Endothelial cell of umbilical vein (primary cell): ENCODE measurements at regions of chr12 and their contacts with region 1.

Region 1: GRCh38 chr12:27243804-27244683 is at the start of gene STK38L:
- DNase-seq: peak; percentile 92
- H3K4me3 ChIP-seq: peak within 1 kb of the TSS; percentile 80 to 87 (median 86)
- H3K27ac ChIP-seq: peak within 1 kb of the TSS; percentile 76
- H3K4me1 ChIP-seq: peaks cover 14% of the 10 kb centered on the region
- H3K27me3 ChIP-seq: no peaks in the 10 kb centered on the region
- CTCF ChIP-seq: peak in 1 of 2 donors; percentile 10
- POLR2A ChIP-seq: peak; percentile 97
- total RNA-seq, gene STK38L: 58.4 and 60.0 TPM in 2 replicates

Region 2: GRCh38 chr12:27142101-27142721 is 101.8 kb before region 1 on chr12:
- CTCF ChIA-PET with region 1: no interaction called
- POLR2A ChIA-PET with region 1: no interaction called
- dilution Hi-C with region 1: no loop called
- intact Hi-C with region 1: loop called (anchors 5 kb)
- DNase-seq: peak; percentile 83
- H3K4me3 ChIP-seq: no peak overlapping the region
- H3K27ac ChIP-seq: no peak overlapping the region
- H3K4me1 ChIP-seq: peaks cover 2% of the 10 kb centered on the region
- H3K27me3 ChIP-seq: no peaks in the 10 kb centered on the region
- CTCF ChIP-seq: peak; percentile 79 to 86
- POLR2A ChIP-seq: no peak

Region 3: GRCh38 chr12:27185234-27186021 is 58.6 kb before region 1 on chr12:
- CTCF ChIA-PET with region 1: no interaction called
- POLR2A ChIA-PET with region 1: no interaction called
- dilution Hi-C with region 1: no loop called
- intact Hi-C with region 1: loop called (anchors 2 kb)
- DNase-seq: peak; percentile 56
- H3K4me3 ChIP-seq: no peak overlapping the region
- H3K27ac ChIP-seq: peak overlapping the region; percentile 15
- H3K4me1 ChIP-seq: peaks cover 17% of the 10 kb centered on the region
- H3K27me3 ChIP-seq: no peaks in the 10 kb centered on the region
- CTCF ChIP-seq: no peak
- POLR2A ChIP-seq: no peak

Region 4: GRCh38 chr12:27219693-27220056 is 24.4 kb before region 1 on chr12:
- CTCF ChIA-PET with region 1: no interaction called
- POLR2A ChIA-PET with region 1: no interaction called
- dilution Hi-C with region 1: no loop called
- intact Hi-C with region 1: no loop called
- DNase-seq: no peak
- H3K4me3 ChIP-seq: no peak overlapping the region
- H3K27ac ChIP-seq: no peak overlapping the region
- H3K4me1 ChIP-seq: no peaks in the 10 kb centered on the region
- H3K27me3 ChIP-seq: no peaks in the 10 kb centered on the region
- CTCF ChIP-seq: no peak
- POLR2A ChIP-seq: no peak

Region 5: GRCh38 chr12:27284751-27285150 is 40.7 kb after region 1 on chr12:
- CTCF ChIA-PET with region 1: interaction called, 6 read pairs
- POLR2A ChIA-PET with region 1: no interaction called
- dilution Hi-C with region 1: no loop called
- intact Hi-C with region 1: loop called (anchors 2 kb)
- DNase-seq: peak; percentile 92
- H3K4me3 ChIP-seq: peak overlapping the region in 1 of 3 experiments; percentile 40
- H3K27ac ChIP-seq: peak overlapping the region; percentile 86
- H3K4me1 ChIP-seq: peaks cover 36% of the 10 kb centered on the region
- H3K27me3 ChIP-seq: no peaks in the 10 kb centered on the region
- CTCF ChIP-seq: no peak
- POLR2A ChIP-seq: no peak

Region 6: GRCh38 chr12:27293463-27293862 is 49.4 kb after region 1 on chr12:
- CTCF ChIA-PET with region 1: no interaction called
- POLR2A ChIA-PET with region 1: interaction called, 3 read pairs
- dilution Hi-C with region 1: no loop called
- intact Hi-C with region 1: loop called (anchors 1 kb)
- DNase-seq: peak; percentile 62
- H3K4me3 ChIP-seq: no peak overlapping the region
- H3K27ac ChIP-seq: peak overlapping the region; percentile 87
- H3K4me1 ChIP-seq: peaks cover 44% of the 10 kb centered on the region
- H3K27me3 ChIP-seq: no peaks in the 10 kb centered on the region
- CTCF ChIP-seq: no peak
- POLR2A ChIP-seq: no peak